Dendritic cell treated with granulocyte-macrophage colony-stimulating factor and Interleukin-4, amounts not matched to agents 40 ng/mL and 50 ng/mL, for 4 days (primary cell): ENCODE measurements at regions of chr2 and their contacts with region 1.

Region 1: GRCh38 chr2:168920504-168921157 is 19.5 kb downstream of the G6PC2 start:
- H3K4me3 Mint-ChIP-seq: no peak overlapping the region
- H3K27ac Mint-ChIP-seq: no peak overlapping the region
- H3K4me1 Mint-ChIP-seq: no peaks in the 10 kb centered on the region
- H3K27me3 Mint-ChIP-seq: no peaks in the 10 kb centered on the region

Region 2: DNA sequence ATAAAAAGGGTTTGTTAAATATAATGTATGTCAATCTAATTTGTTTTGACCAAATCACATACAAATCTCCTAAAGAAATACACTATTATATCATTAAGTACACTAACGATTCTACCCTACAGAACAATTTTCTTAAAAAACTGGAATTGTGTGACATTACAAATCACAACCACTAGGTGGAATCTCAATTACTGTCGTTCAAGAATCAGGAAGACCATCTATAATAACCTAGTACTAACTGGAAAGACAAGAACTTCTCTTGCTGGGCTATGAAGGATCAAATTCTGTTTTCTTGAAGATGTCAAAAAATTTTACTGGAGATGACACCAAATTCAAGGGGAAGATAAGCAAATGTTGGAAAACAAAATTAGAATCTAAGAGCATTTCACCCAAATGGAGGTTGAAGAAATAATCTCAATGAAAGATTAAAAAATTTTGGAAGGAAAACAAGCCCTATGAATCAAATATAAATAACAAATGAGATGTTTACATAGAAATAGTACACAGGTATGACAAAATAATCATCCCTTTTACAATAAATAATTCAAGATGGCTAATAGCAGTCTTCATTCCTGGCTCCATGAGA is 784.1 kb before region 1 on chr2:
- intact Hi-C with region 1: loop called (anchors 2 kb)
- H3K4me3 Mint-ChIP-seq: no peak overlapping the region
- H3K27ac Mint-ChIP-seq: no peak overlapping the region
- H3K4me1 Mint-ChIP-seq: no peaks in the 10 kb centered on the region
- H3K27me3 Mint-ChIP-seq: no peaks in the 10 kb centered on the region